HCT116 (cell line): ENCODE measurements at regions of chr2 and their contacts with region 1.

Region 1: GRCh38 chr2:9630749-9631483 is at the start of gene YWHAQ:
- DNase-seq: peak; percentile 97
- ATAC-seq: peak; percentile 91
- H3K4me3 ChIP-seq: peak within 1 kb of the TSS; percentile 88 to 95
- H3K27ac ChIP-seq: peak within 1 kb of the TSS; percentile 75
- H3K4me1 ChIP-seq: peaks cover 12 to 28% of the 10 kb centered on the region in 2 experiments; a peak in 3 of 4 replicates
- H3K27me3 ChIP-seq: no peaks in the 10 kb centered on the region
- CTCF ChIP-seq: no peak
- POLR2A ChIP-seq: peak; percentile 86
- RAD21 ChIP-seq: no peak; the same call in 1 of the 2 replicates
- total RNA-seq, gene YWHAQ: 365 TPM

Region 2: DNA sequence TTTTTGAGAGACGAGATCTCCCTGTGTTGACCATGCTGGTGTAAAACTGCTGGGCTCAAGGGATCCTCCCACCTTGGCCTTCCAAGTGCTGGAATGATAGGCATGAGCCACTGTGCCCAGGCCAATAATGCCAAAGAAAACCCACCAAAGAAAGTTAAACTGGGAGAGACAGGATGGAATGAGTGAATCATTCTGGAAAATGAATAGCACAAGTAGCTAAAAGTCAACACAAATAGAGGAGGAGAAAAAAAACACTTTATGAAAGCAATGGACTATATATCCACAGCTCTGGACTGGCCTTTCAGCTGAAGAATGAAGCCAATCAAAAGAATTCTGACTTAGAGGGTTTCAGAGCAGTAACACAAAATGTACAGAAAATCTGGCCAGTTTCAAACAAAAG is 132.7 kb before region 1 on chr2:
- CTCF ChIA-PET with region 1: no interaction called
- POLR2A ChIA-PET with region 1: no interaction called
- RAD21 ChIA-PET with region 1: no interaction called
- intact Hi-C with region 1: no loop called
- DNase-seq: no peak
- ATAC-seq: no peak
- H3K4me3 ChIP-seq: no peak overlapping the region
- H3K27ac ChIP-seq: no peak overlapping the region
- H3K4me1 ChIP-seq: no peaks in the 10 kb centered on the region
- H3K27me3 ChIP-seq: no peaks in the 10 kb centered on the region
- CTCF ChIP-seq: no peak
- POLR2A ChIP-seq: no peak
- RAD21 ChIP-seq: no peak

Region 3: DNA sequence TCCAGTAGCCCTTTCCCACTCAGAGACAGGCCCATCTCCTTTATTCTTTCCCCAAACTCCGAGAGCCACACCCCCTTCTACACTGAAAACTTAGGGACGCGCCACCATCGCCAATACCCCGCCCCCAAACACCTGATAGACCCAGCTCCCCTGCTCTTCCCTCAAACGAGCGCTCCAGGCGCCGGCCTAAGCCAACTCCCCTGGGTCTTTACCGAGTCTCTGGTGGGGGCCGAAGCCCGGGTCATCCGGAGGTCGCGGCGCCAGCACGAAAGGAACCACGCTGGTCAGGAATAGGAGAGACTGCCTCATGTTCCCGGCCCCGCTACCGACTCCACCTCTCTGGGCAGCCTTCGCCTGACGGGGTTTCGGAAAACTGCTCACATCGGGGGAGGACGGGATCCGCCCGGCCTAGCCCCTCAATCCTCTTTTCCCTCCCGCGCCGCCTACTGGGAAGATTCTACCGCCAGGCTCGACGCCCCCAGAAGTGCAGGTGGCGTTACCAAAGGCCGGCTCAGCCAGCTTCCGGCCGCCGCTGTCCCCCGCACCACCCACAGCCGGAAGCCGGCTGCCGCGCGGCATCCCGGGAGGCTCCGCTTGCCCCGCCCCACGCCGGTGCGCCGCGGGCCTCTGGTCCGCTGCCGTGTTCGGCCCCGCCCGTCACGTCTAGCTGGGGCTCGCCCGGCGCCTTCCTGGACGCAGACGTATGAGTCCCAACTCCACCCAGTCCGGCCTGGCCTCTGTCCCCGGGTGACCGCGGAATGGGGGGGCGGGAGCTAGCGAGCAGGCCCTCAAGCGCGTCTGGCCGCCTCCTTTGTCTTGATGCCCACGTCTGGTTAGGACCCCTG is 75.4 kb before region 1 on chr2 and contains the start of gene ADAM17:
- CTCF ChIA-PET with region 1: no interaction called
- POLR2A ChIA-PET with region 1: interaction called, 10 read pairs
- RAD21 ChIA-PET with region 1: no interaction called
- intact Hi-C with region 1: loop called (anchors 2 kb)
- DNase-seq: peak; percentile 88
- ATAC-seq: peak; percentile 93
- H3K4me3 ChIP-seq: peak within 1 kb of the TSS; percentile 84 to 91
- H3K27ac ChIP-seq: peak within 1 kb of the TSS; percentile 90
- H3K4me1 ChIP-seq: peaks cover 36 to 65% of the 10 kb centered on the region in 2 experiments
- H3K27me3 ChIP-seq: no peaks in the 10 kb centered on the region
- CTCF ChIP-seq: peak in 1 of 3 experiments; percentile 45; a peak in 3 of 6 replicates
- POLR2A ChIP-seq: peak; percentile 77
- RAD21 ChIP-seq: peak; percentile 15; the same call in 1 of the 2 replicates
- total RNA-seq, gene ADAM17: 39.2 TPM

Region 4: DNA sequence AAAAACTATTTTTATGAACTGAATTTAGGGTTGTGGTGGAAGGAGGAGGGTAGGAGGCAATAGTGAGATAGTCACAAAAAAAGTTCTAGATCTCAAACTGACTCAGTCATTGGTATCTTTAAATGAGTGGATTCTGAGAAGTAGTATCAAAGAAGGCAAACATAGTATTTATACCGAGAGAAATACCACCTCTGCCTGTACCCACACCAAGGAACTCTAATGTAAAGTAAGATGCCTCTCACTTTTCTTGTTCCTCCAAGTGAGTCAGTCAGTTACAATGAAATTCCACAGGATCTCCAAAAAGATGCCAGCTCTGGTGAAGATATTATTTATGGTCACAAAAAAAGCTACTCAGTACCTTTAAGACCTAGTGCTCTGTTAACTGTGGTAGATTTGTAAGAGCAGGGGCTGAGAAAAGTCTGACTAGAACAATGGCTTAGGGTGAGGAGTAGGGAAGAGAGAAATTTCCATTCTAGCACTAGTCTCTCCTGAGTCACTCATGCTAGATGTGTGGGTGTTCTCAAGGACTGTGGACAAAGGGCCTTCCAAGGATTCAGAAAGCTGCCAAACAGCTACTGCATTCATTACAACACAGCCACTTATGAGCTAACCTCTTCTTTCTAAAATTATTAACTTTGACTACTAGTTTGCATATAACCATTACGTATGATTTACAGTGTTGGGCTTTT is 36.4 kb before region 1 on chr2:
- CTCF ChIA-PET with region 1: no interaction called
- POLR2A ChIA-PET with region 1: interaction called, 10 read pairs
- RAD21 ChIA-PET with region 1: no interaction called
- intact Hi-C with region 1: no loop called
- DNase-seq: peak; percentile 59
- ATAC-seq: peak; percentile 87
- H3K4me3 ChIP-seq: peak overlapping the region in 1 of 2 experiments; percentile 17; a peak in 1 of 4 replicates
- H3K27ac ChIP-seq: peak overlapping the region; percentile 78
- H3K4me1 ChIP-seq: peaks cover 41 to 47% of the 10 kb centered on the region in 2 experiments
- H3K27me3 ChIP-seq: no peaks in the 10 kb centered on the region
- CTCF ChIP-seq: no peak
- POLR2A ChIP-seq: no peak
- RAD21 ChIP-seq: no peak

Region 5: DNA sequence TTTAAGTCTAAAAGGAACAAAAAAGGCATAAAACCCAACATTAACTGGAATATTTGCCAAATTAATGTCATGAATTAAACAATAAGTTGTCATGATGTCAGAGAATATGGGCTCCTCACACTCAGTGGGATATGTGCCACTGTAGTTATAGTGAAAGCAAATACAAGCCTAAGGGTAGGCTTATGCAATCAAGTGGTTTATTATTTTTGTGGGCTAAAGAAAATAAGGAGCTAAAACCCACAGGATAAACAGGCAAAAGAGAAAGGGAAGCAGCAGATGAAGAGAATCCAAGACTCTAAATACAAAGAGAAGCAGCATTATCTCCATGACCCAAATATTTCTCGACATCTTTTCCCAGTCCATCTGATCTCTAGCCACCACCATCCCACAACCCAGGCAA is 17.6 kb before region 1 on chr2:
- CTCF ChIA-PET with region 1: no interaction called
- POLR2A ChIA-PET with region 1: interaction called, 10 read pairs
- RAD21 ChIA-PET with region 1: no interaction called
- intact Hi-C with region 1: no loop called
- DNase-seq: no peak
- ATAC-seq: no peak
- H3K4me3 ChIP-seq: no peak overlapping the region
- H3K27ac ChIP-seq: no peak overlapping the region
- H3K4me1 ChIP-seq: peaks cover 13 to 47% of the 10 kb centered on the region in 2 experiments
- H3K27me3 ChIP-seq: no peaks in the 10 kb centered on the region
- CTCF ChIP-seq: no peak
- POLR2A ChIP-seq: no peak
- RAD21 ChIP-seq: no peak

Region 6: GRCh38 chr2:9753276-9753600 is 122.3 kb after region 1 on chr2:
- CTCF ChIA-PET with region 1: no interaction called
- POLR2A ChIA-PET with region 1: no interaction called
- RAD21 ChIA-PET with region 1: no interaction called
- intact Hi-C with region 1: loop called (anchors 5 kb)
- DNase-seq: peak; percentile 88
- ATAC-seq: peak; percentile 82
- H3K4me3 ChIP-seq: peak overlapping the region; percentile 50 to 56
- H3K27ac ChIP-seq: peak overlapping the region; percentile 88
- H3K4me1 ChIP-seq: peaks cover 26 to 46% of the 10 kb centered on the region in 2 experiments
- H3K27me3 ChIP-seq: no peaks in the 10 kb centered on the region
- CTCF ChIP-seq: no peak
- POLR2A ChIP-seq: no peak
- RAD21 ChIP-seq: no peak